ENCODE measurements at regions of chr1 and their contacts with region 1.

Region 1: DNA sequence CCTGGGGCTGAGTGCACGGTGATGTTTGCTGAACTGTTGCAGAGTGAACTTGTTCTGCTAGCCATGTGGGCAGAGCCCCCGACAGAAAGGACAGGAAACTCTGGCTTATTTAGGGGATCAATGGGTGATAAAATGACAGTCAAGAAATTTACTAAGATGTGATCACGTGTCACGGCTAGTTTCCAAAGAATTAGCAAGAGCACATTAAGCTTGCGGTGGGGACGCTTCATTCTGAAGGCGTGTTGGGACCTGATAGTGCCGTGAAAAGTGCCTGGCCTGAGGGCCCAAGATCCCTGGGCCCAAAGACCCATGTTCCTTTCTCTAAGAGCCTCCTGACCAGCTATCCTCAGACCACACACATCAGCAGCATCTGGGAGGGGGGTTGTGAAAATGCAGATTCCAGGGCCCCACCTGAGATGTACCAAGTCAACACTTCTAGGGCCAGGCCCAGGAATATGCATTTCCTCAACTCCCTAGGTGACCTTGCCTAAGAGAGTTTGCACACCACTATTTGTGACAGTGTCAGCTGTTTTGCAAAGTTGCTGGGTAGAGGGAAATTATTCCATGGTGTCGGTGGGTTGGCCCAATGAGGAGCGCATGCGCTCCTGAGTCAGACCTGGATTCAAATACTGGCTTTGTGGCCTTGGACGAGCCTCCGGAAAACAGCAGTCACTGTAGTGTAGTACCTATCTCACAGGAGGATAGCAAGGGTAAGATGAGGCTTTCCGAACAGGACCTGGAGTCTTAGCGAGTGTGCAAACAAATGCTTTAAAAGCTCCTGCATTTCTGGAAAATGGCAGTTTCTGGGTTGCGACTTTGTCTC is 77.5 kb downstream of the SPSB1 start:
- DNase-seq: no peak
- ATAC-seq: no peak
- H3K4me3 ChIP-seq: no peak overlapping the region
- H3K27ac ChIP-seq: no peak overlapping the region
- H3K4me1 ChIP-seq: peaks cover 7% of the 10 kb centered on the region
- H3K27me3 ChIP-seq: no peaks in the 10 kb centered on the region
- CTCF ChIP-seq: no peak

Region 2: DNA sequence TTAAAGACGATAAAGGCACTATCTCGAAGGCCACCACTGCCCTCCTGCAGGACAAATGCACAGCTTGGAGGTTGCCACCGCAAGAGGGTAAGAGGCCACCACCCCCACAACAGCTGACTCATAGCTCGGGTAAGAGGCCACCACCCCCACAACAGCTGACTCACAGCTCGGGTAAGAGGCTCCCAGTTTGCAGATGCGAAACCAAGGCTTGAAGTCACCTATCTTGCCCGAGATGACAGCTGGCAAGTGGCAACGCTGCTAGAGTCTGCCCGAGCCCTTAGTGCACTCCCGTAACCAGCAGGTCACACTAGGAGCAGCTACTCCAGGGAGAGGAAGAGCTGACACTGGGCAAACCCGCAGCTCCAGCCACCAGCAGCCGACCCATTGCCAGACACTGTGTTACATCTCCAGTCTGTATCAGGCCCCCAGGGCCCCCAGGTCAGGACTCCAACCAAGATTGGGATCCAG is 94.6 kb before region 1 on chr1:
- intact Hi-C with region 1: no loop called
- DNase-seq: peak; percentile 83 to 89
- ATAC-seq: peak; percentile 83 to 91 (median 87)
- H3K4me3 ChIP-seq: peak overlapping the region; percentile 28
- H3K27ac ChIP-seq: peak overlapping the region; percentile 82
- H3K4me1 ChIP-seq: peaks cover 22% of the 10 kb centered on the region
- H3K27me3 ChIP-seq: no peaks in the 10 kb centered on the region
- CTCF ChIP-seq: no peak

Region 3: GRCh38 chr1:9302745-9303524 is 67.2 kb before region 1 on chr1:
- intact Hi-C with region 1: loop called in 1 of 2 experiments (anchors 5 kb)
- DNase-seq: peak in 1 of 2 donors; percentile 62
- ATAC-seq: peak; percentile 70 to 82 (median 77)
- H3K4me3 ChIP-seq: no peak overlapping the region
- H3K27ac ChIP-seq: peak overlapping the region; percentile 53
- H3K4me1 ChIP-seq: peaks cover 44% of the 10 kb centered on the region
- H3K27me3 ChIP-seq: no peaks in the 10 kb centered on the region
- CTCF ChIP-seq: no peak

Region 4: GRCh38 chr1:9990944-9991343 is 620.8 kb after region 1 on chr1:
- intact Hi-C with region 1: no loop called
- DNase-seq: no peak
- ATAC-seq: peak in 1 of 4 donors; percentile 44
- H3K4me3 ChIP-seq: no peak overlapping the region
- H3K27ac ChIP-seq: no peak overlapping the region
- H3K4me1 ChIP-seq: no peaks in the 10 kb centered on the region
- H3K27me3 ChIP-seq: peaks cover 0 to 2% (median 0%) of the 10 kb centered on the region in 3 donors
- CTCF ChIP-seq: no peak